Activated CD4-positive, alpha-beta T cell treated with anti-CD3 and anti-CD28 coated beads for 36 hours (primary cell): ENCODE measurements at regions of chr20 and their contacts with region 1.

Region 1: DNA sequence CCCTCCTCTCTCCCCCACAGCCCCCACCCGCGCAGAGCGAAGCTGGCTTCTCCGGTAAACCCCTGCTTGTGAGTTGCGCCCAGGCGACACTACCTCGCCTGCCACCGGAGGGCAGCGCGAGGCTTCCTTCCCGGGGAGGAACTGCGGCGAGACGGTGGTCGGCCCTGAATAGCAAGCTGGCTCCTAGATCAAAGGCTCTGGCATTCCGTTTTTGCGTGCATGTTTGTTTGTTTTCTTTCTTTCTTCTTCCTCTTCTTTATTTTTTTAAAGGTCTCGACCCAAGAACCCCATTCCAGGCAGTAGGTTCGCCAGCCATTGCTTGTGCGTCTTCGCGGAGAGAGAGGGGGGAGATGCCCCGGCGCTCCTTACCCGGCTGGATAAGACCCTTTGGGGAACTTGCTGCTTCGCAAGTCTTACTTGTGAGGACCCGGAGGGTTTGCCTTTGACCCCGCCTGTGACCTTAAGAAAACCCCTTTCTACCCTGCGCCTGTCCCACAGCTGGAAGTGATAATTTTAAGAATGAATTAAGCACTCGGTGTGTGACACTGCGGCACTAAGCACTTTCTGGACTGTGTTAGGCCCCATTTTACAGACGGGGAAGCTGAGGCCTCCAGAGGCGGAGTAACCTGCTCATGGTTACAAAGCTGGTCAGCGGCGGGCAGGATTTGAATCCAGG is 92.7 kb upstream of the SIRPA start:
- DNase-seq: peak; percentile 74
- ATAC-seq: peak; percentile 79
- H3K4me3 Mint-ChIP-seq: peak overlapping the region; percentile 59
- H3K27ac Mint-ChIP-seq: no peak overlapping the region
- H3K4me1 Mint-ChIP-seq: peaks cover 7% of the 10 kb centered on the region
- H3K27me3 Mint-ChIP-seq: peaks cover 43% of the 10 kb centered on the region

Region 2: GRCh38 chr20:815914-816606 is 986.5 kb before region 1 on chr20:
- CTCF ChIA-PET with region 1: no interaction called
- POLR2A ChIA-PET with region 1: no interaction called
- intact Hi-C with region 1: no loop called
- DNase-seq: peak; percentile 80
- ATAC-seq: peak; percentile 72
- H3K4me3 Mint-ChIP-seq: no peak overlapping the region
- H3K27ac Mint-ChIP-seq: no peak overlapping the region
- H3K4me1 Mint-ChIP-seq: no peaks in the 10 kb centered on the region
- H3K27me3 Mint-ChIP-seq: peaks cover 11% of the 10 kb centered on the region

Region 3: DNA sequence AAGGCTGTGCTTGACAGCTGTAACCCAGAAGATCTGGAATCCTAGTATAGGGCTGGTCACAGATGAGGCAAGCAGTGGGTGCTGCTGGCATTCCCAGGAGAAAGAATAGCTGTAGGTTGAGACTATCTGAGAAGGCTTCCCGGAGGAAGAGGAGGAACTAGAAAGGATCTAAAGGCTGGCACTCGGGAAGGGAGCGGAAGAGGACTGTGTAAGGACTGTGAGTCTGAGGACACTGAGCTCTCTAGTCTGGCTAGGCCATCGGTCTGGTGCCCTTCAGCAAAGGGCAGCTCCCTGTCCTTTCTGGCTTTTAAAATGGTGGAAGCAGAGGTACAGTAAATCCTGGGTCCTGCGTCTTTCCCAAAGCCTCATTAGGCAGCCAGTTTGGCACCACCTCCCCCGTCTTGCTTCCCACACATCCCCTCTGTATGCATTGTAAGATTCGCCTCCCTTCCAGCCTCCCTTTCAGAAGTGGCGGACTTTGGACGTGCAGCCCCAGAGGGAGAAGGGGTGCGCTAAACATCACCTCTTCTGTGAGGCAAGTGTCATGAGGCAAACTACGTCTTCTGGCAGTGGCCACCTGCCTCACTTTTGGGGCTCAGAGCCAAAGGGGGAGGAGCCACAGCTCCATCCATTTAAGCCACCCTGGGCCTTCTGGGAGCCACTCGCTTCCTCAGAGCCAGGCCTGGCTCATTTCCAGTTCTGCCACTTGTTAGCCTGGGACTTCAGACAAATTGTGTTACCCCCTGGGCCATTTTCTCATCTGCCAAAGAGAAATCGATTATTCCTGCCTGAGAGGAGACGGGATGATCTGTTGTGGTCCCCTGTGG is 527.8 kb before region 1 on chr20:
- CTCF ChIA-PET with region 1: no interaction called
- POLR2A ChIA-PET with region 1: no interaction called
- intact Hi-C with region 1: no loop called
- DNase-seq: no peak
- ATAC-seq: no peak
- H3K4me3 Mint-ChIP-seq: no peak overlapping the region
- H3K27ac Mint-ChIP-seq: no peak overlapping the region
- H3K4me1 Mint-ChIP-seq: peaks cover 4% of the 10 kb centered on the region
- H3K27me3 Mint-ChIP-seq: no peaks in the 10 kb centered on the region

Region 4: GRCh38 chr20:1790386-1790785 is 12.1 kb before region 1 on chr20:
- CTCF ChIA-PET with region 1: no interaction called
- POLR2A ChIA-PET with region 1: no interaction called
- intact Hi-C with region 1: no loop called
- DNase-seq: no peak
- ATAC-seq: no peak
- H3K4me3 Mint-ChIP-seq: no peak overlapping the region
- H3K27ac Mint-ChIP-seq: no peak overlapping the region
- H3K4me1 Mint-ChIP-seq: no peaks in the 10 kb centered on the region
- H3K27me3 Mint-ChIP-seq: peaks cover 25% of the 10 kb centered on the region

Region 5: GRCh38 chr20:1894951-1895673 is 92.6 kb after region 1 on chr20 and contains the start of gene SIRPA:
- CTCF ChIA-PET with region 1: no interaction called
- POLR2A ChIA-PET with region 1: no interaction called
- intact Hi-C with region 1: loop called in 1 of 2 experiments (anchors 2 kb)
- DNase-seq: peak; percentile 26
- ATAC-seq: peak; percentile 65
- H3K4me3 Mint-ChIP-seq: peak within 1 kb of the TSS; percentile 48
- H3K27ac Mint-ChIP-seq: no peak within 1 kb of the TSS
- H3K4me1 Mint-ChIP-seq: no peaks in the 10 kb centered on the region
- H3K27me3 Mint-ChIP-seq: peaks cover 60% of the 10 kb centered on the region
- total RNA-seq, gene SIRPA: 0.05 TPM in 1 of 2 experiments, not detected in the other